Caco-2 (cell line): ENCODE measurements at regions of chr1 and their contacts with region 1.

Region 1: DNA sequence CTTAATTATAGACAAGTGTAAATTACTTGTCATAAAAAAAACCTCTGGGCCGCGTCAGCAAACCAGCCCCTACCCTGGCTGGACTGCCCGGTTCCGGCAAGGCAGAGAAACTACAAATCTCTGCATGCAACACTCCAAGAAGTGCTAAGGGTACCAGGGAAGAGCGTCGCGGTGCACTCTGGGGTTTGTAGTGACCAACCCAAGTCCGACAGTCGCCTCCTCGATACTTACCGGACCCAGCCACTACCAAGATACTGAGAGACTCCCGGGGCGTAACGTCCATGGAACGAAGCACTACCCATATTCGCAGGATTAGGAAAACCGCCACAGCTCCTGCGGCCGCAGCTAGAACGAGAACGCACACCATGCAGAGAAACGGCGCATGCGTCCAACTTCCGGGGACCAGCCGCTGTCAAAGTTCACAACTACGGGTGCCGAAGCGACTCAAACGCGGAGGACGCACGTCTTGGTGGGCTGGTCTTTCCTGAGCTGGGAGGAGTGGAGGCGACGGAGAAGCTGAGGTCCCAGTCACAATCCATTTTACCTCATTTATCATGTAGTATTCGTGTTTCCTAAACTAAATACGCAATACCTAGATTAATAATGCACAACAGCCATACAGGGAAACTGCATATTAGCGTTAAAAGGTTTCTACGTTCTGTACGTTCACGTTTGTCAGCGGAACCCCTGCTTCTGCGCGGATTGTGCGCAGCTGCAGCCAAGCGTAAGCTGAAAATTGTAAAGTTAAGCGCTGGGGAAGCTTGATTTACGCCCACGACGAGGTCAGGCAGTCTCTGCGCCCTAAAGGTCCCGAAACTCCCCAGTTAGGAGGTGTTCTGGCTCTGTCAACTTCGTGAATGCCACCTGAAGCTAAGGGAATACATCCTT is at the start of gene ALG14:
- DNase-seq: peak; percentile 87 to 93
- H3K4me3 ChIP-seq: peak within 1 kb of the TSS; percentile 57
- H3K4me3 Mint-ChIP-seq: peak within 1 kb of the TSS; percentile 99
- H3K27ac Mint-ChIP-seq: peak within 1 kb of the TSS; percentile 95
- H3K4me1 ChIP-seq: peaks cover 33% of the 10 kb centered on the region
- H3K4me1 Mint-ChIP-seq: peaks cover 11% of the 10 kb centered on the region
- H3K27me3 ChIP-seq: no peaks in the 10 kb centered on the region
- H3K27me3 Mint-ChIP-seq: no peaks in the 10 kb centered on the region
- CTCF ChIP-seq: no peak
- total RNA-seq, gene ALG14: 4.5 and 6.1 TPM in 2 replicates

Region 2: GRCh38 chr1:94819941-94820746 is 252.6 kb before region 1 on chr1 and contains the start of gene SLC44A3:
- CTCF ChIA-PET with region 1: no interaction called
- POLR2A ChIA-PET with region 1: no interaction called
- intact Hi-C with region 1: no loop called
- DNase-seq: peak; percentile 70 to 78
- H3K4me3 ChIP-seq: peak within 1 kb of the TSS; percentile 81
- H3K4me3 Mint-ChIP-seq: peak within 1 kb of the TSS; percentile 78
- H3K27ac Mint-ChIP-seq: peak within 1 kb of the TSS; percentile 85
- H3K4me1 ChIP-seq: peaks cover 13% of the 10 kb centered on the region
- H3K4me1 Mint-ChIP-seq: peaks cover 5% of the 10 kb centered on the region
- H3K27me3 ChIP-seq: no peaks in the 10 kb centered on the region
- H3K27me3 Mint-ChIP-seq: no peaks in the 10 kb centered on the region
- CTCF ChIP-seq: no peak
- total RNA-seq, gene SLC44A3: 16.9 and 23.7 TPM in 2 replicates

Region 3: GRCh38 chr1:95084317-95085176 is 11.8 kb after region 1 on chr1:
- CTCF ChIA-PET with region 1: interaction called, 3 read pairs
- POLR2A ChIA-PET with region 1: no interaction called
- intact Hi-C with region 1: loop called (anchors 2 kb)
- DNase-seq: peak in 1 of 2 experiments; percentile 16
- H3K4me3 ChIP-seq: no peak overlapping the region
- H3K4me3 Mint-ChIP-seq: no peak overlapping the region
- H3K27ac Mint-ChIP-seq: no peak overlapping the region
- H3K4me1 ChIP-seq: peaks cover 34% of the 10 kb centered on the region
- H3K4me1 Mint-ChIP-seq: peaks cover 18% of the 10 kb centered on the region
- H3K27me3 ChIP-seq: no peaks in the 10 kb centered on the region
- H3K27me3 Mint-ChIP-seq: no peaks in the 10 kb centered on the region
- CTCF ChIP-seq: peak; percentile 35 to 48

Region 4: DNA sequence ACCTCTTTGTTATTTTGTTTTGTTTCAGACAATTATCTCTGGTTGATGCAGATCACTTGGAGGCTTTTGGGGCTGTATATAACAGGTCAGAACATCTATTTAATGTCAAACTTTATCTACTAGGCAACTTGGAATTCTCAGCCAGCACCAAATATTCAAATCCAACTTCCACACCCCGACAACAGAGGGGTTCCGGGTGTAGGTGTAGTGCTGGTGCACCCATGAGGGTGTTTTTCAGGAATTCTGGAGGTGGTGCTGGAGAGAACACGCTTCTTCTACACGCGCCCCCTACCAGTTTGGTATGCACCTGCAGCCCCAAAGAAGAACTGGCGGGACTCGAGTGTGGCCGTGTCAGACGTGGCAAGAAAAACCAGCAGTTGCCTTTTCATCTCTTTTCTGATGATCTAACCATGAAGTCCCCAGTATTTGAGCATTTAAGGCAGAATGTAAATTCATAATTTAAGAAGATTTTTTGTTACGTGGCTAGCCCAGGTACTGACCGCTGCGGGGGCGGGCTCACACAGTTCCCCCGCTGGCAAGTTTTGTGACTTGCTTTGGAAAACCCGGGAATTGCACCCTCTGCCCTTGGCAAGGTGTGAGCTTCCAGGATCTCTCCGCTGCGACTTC is 43.9 kb after region 1 on chr1:
- CTCF ChIA-PET with region 1: interaction called, 6 read pairs
- POLR2A ChIA-PET with region 1: interaction called, 4 read pairs
- intact Hi-C with region 1: loop called (anchors 1 kb)
- DNase-seq: peak; percentile 79
- H3K4me3 ChIP-seq: peak overlapping the region; percentile 59
- H3K4me3 Mint-ChIP-seq: peak overlapping the region; percentile 75
- H3K27ac Mint-ChIP-seq: peak overlapping the region; percentile 55
- H3K4me1 ChIP-seq: peaks cover 27% of the 10 kb centered on the region
- H3K4me1 Mint-ChIP-seq: peaks cover 14% of the 10 kb centered on the region
- H3K27me3 ChIP-seq: no peaks in the 10 kb centered on the region
- H3K27me3 Mint-ChIP-seq: no peaks in the 10 kb centered on the region
- CTCF ChIP-seq: peak; percentile 52 to 68

Region 5: DNA sequence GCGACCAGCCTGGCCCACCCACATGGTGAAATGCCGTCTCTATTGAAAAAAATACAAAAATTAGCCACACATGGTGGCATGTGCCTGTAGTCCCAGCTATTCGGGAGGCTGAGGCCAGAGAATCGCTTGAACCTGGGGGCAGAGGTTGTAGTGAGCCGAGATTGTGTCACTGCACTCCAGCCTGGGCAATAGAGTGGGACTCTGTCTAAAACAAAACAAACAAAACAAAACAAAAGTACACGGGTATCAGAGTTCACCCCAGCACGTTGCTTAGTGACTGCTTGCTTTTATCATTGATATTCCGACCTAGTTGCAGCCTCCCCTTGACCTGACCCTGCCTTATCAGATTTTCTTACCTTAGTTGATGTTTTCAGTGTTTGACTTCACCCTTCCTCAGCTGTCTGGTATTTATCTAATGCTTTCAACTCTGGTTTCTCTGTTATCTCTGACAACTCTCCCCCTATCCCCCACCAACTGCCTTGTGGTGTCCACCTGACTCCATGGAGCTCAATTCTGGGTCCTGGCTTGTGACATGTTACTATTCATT is 49.4 kb after region 1 on chr1:
- CTCF ChIA-PET with region 1: interaction called, 3 read pairs
- POLR2A ChIA-PET with region 1: interaction called, 4 read pairs
- intact Hi-C with region 1: loop called (anchors 1 kb)
- DNase-seq: peak; percentile 69 to 70
- H3K4me3 ChIP-seq: no peak overlapping the region
- H3K4me3 Mint-ChIP-seq: peak overlapping the region; percentile 2
- H3K27ac Mint-ChIP-seq: no peak overlapping the region
- H3K4me1 ChIP-seq: peaks cover 30% of the 10 kb centered on the region
- H3K4me1 Mint-ChIP-seq: peaks cover 14% of the 10 kb centered on the region
- H3K27me3 ChIP-seq: no peaks in the 10 kb centered on the region
- H3K27me3 Mint-ChIP-seq: no peaks in the 10 kb centered on the region
- CTCF ChIP-seq: no peak

Region 6: DNA sequence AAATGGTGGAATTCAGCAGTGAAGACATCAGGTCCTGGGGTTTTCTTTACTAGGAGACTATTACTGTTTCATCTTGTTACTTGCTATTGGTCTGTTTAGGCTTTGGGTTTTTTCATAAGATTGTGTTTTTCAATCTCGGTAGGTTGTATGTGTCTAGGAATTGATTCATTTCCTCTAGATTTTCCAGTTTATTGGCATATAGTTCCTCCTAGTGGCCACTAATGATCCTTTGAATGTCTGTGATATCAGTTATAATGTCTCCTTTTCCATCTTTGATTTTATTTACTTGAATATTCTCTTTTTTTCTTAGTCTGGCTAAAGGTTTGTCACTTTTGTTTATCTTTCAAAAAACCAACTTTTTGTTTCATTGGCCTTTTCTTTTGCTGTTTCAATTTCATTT is 394.3 kb after region 1 on chr1:
- CTCF ChIA-PET with region 1: no interaction called
- POLR2A ChIA-PET with region 1: interaction called, 10 read pairs
- intact Hi-C with region 1: no loop called
- DNase-seq: no peak
- H3K4me3 ChIP-seq: no peak overlapping the region
- H3K4me3 Mint-ChIP-seq: no peak overlapping the region
- H3K27ac Mint-ChIP-seq: no peak overlapping the region
- H3K4me1 ChIP-seq: no peaks in the 10 kb centered on the region
- H3K4me1 Mint-ChIP-seq: no peaks in the 10 kb centered on the region
- H3K27me3 ChIP-seq: no peaks in the 10 kb centered on the region
- H3K27me3 Mint-ChIP-seq: no peaks in the 10 kb centered on the region
- CTCF ChIP-seq: no peak